MCF 10A (cell line): ENCODE measurements at regions of chr6 and their contacts with region 1.

Region 1: GRCh38 chr6:75601304-75602245 is at the start of gene SENP6:
- DNase-seq: peak; percentile 76
- H3K4me3 Mint-ChIP-seq: peak within 1 kb of the TSS; percentile 97
- H3K27ac Mint-ChIP-seq: peak within 1 kb of the TSS; percentile 100
- H3K4me1 Mint-ChIP-seq: peaks cover 15% of the 10 kb centered on the region
- H3K27me3 Mint-ChIP-seq: no peaks in the 10 kb centered on the region
- CTCF ChIP-seq: no peak
- total RNA-seq, gene SENP6: 101 TPM in 2 replicates

Region 2: DNA sequence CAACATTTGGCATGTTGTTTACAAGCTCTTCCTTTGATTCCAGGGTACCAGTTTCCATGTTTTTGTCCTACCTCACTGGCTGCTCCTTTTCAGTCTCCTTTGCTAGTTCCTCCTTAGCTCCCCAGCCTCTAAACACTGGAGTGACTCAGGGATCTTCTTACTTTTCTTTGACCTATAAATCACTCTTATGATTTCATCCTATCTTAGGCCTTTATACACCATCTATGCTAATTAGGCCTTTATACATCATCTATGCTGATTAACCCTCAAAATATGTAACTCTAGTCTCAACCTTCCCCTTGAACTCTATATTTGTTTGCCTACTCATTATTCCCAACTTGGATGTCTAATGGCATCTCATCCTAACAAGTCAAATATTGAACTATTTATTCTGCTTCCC is 326.5 kb before region 1 on chr6:
- CTCF ChIA-PET with region 1: no interaction called
- POLR2A ChIA-PET with region 1: interaction called, 20 read pairs
- intact Hi-C with region 1: no loop called
- DNase-seq: peak; percentile 39
- H3K4me3 Mint-ChIP-seq: no peak overlapping the region
- H3K27ac Mint-ChIP-seq: peak overlapping the region; percentile 53
- H3K4me1 Mint-ChIP-seq: peaks cover 65% of the 10 kb centered on the region
- H3K27me3 Mint-ChIP-seq: no peaks in the 10 kb centered on the region
- CTCF ChIP-seq: no peak

Region 3: DNA sequence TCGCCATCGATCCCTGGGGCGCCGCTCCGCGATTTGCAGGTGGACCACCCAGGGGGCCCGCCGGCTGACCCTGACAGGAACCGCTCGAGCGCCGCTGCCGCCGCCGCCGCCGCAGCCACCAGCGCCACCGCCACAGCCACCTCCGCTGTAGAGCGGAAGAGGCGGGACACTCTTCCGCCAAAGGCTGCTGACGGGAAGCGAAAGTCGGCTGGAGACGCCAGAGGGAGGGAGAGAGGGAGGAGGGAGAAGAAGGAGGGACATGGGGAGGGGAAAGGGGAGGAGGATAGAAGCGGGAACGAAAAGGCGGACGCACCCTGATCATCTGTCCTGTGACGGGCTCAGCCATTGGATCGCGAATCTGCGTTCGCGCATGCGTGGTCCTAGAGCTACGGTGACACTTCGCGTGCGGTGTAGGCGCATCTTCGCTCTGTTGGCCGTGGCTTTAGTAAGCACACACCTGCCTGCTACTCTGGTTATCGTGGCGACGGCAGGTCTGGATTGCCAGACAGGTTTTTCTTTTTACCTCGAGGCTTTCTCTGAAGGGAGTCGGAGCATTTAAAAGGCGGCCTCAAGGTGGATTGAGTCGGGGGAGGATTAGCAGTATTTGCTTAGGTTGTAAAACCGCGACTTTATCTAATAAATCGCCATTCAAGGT is 316.8 kb before region 1 on chr6 and contains the start of gene TMEM30A:
- CTCF ChIA-PET with region 1: no interaction called
- POLR2A ChIA-PET with region 1: interaction called, 24 read pairs
- intact Hi-C with region 1: no loop called
- DNase-seq: peak; percentile 99
- H3K4me3 Mint-ChIP-seq: no peak within 1 kb of the TSS
- H3K27ac Mint-ChIP-seq: no peak within 1 kb of the TSS
- H3K4me1 Mint-ChIP-seq: peaks cover 21% of the 10 kb centered on the region
- H3K27me3 Mint-ChIP-seq: no peaks in the 10 kb centered on the region
- CTCF ChIP-seq: no peak
- total RNA-seq, gene TMEM30A: 53.7 and 71.4 TPM in 2 replicates

Region 4: DNA sequence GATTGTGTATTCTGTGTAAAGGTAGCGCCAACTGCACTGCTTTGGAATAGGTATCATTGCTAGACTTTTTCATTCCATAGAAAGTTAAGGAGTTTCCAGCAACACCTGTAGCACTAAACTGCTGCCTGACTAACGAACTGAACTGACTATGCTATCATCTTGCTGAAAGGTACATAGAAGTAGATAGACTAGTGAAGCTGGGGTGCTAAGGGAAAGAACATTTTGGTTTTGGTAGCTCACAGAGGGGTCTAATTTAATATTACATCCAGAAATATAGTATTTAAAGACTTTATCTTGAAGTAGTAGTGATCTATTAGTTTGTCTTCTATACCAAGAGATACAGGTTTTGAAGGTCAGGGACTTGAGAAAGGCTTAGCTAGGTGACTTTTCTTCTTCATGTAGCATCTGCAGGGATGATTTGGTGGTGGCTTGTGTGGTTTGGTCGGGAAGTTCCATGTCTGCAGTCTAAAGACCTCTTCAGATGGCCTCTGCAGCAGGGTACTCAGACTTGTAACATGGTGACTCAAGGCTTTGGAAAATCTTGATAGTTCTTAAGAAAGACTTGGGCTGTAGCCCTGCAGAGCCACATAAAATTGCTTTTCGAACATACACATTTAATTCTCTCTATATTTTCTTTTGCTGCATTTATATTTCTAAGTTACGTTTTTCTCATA is 10.3 kb after region 1 on chr6:
- CTCF ChIA-PET with region 1: interaction called, 3 read pairs
- POLR2A ChIA-PET with region 1: interaction called, 22 read pairs
- intact Hi-C with region 1: no loop called
- DNase-seq: no peak
- H3K4me3 Mint-ChIP-seq: no peak overlapping the region
- H3K27ac Mint-ChIP-seq: no peak overlapping the region
- H3K4me1 Mint-ChIP-seq: peaks cover 50% of the 10 kb centered on the region
- H3K27me3 Mint-ChIP-seq: no peaks in the 10 kb centered on the region
- CTCF ChIP-seq: no peak

Region 5: DNA sequence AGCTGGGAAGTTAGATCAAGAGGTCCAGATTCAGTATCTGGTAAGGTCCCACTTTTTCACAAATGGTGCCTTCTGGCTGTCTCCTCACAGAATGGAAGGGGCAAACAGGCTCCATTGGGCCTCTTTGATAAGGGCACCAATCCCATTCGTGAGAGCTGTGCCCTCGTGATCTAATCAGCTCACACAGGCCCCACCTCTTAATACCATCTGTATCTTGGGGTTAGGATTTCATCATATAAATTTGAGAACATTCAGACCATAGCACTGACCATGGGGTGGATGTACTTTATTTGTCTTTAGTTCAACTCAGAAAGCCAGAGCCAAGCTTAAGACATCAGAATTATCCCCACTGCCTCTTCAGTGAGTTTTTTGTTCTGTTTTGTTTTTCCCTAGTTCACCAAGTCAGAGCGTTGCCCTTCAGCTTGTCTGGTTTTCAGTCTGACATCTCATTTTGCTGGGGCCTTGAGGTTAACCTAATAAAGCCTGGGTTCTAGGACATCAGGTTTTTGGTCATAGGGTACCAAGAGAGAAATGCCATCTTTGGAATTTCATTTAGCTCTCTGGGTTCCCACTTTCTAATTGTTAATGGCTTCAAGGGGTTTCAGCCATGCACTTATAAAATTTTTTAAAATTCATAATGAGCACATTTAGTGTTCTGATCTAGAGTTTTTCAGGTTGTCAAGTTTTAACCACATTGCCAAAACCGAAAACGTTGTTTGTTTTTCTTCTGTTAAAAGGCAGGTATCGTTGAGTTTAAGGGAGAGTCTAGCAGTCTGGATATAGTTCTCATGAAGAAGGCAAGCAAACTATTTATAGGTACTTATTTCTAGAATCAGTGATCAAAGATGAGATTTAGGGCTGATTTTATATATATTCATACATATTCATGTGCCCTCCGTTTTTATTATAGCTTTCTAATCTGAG is 19.1 kb after region 1 on chr6:
- CTCF ChIA-PET with region 1: no interaction called
- POLR2A ChIA-PET with region 1: interaction called, 16 read pairs
- intact Hi-C with region 1: no loop called
- DNase-seq: no peak
- H3K4me3 Mint-ChIP-seq: no peak overlapping the region
- H3K27ac Mint-ChIP-seq: peak overlapping the region; percentile 29
- H3K4me1 Mint-ChIP-seq: peaks cover 19% of the 10 kb centered on the region
- H3K27me3 Mint-ChIP-seq: no peaks in the 10 kb centered on the region
- CTCF ChIP-seq: no peak

Region 6: DNA sequence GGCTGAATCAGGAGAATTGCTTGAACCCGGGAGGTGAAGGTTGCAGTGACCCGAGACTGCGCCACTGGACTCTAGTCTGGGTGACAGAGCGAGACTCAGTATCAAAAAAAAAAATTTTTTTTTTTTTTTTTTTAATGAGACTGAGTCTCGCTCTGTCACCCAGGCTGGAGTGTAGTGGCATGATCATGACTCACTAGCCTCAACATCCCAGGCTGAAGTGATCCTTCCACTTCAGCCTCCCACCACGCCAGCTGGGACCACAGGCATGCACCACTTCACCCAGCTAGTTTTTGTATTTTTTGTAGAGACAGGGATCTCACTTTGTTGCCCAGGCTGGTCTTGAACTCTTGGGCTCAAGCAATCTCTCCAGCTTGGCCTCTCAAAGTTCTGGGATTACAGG is 200.8 kb after region 1 on chr6:
- CTCF ChIA-PET with region 1: no interaction called
- POLR2A ChIA-PET with region 1: no interaction called
- intact Hi-C with region 1: no loop called
- DNase-seq: no peak
- H3K4me3 Mint-ChIP-seq: no peak overlapping the region
- H3K27ac Mint-ChIP-seq: no peak overlapping the region
- H3K4me1 Mint-ChIP-seq: peaks cover 4% of the 10 kb centered on the region
- H3K27me3 Mint-ChIP-seq: no peaks in the 10 kb centered on the region
- CTCF ChIP-seq: no peak